Activated B cell treated with CpG ODN at 0.5 μM for 24 hours (primary cell): ENCODE measurements at regions of chr2 and their contacts with region 1.

Region 1: DNA sequence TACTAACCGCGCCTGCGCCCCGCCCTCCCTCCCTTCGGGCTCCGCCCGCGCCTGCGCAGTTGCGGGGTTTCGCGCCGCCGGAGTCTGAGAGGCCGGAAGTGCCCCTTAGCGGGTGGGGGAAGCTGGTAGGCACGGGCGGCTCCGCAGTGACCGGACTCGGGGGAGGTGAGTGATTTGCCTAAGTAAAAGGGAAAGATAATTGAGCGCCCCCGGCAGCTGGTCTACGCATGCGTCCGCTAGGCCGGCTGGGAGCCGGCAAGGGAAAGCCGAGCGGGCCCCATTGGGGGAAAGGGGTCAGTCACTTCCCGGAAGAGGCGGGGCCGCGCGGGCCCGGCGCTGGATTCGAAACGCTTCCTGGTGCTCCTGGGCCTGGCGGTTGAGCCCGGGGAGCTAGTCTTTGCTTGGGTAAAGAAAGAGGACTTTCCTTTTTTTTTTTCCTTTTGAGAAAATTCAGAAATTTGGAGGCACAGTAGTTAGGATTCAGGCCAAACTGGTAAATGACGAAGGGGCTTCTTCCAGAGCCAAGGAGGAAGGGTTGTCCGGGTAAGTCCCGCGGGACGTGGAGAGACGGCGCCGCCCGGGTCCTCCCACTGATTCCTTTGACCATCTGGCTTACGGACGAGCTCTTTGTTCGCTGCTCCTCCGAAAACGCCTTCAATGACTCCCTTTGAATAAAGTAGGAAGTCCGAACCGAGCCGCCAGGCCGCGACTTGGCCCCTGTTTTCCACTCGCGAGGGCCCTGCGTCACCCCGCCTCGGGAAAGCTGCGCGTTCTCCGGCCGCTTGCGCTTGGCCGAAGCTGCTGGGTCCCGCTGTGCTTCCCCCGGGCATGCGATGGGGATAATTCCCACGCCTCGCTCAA is at the starts of genes GEN1 and SMC6:
- DNase-seq: peak; percentile 90
- ATAC-seq: peak; percentile 83
- H3K4me3 Mint-ChIP-seq: peak within 1 kb of the TSS; percentile 95
- H3K27ac Mint-ChIP-seq: peak within 1 kb of the TSS; percentile 95
- H3K4me1 Mint-ChIP-seq: peaks cover 61% of the 10 kb centered on the region
- H3K27me3 Mint-ChIP-seq: no peaks in the 10 kb centered on the region
- CTCF ChIP-seq: no peak
- total RNA-seq, gene GEN1: 141 and 163 TPM in 2 replicates
- total RNA-seq, gene SMC6: 121 and 127 TPM in 2 replicates

Region 2: GRCh38 chr2:16656784-16657391 is 1097.1 kb before region 1 on chr2:
- CTCF ChIA-PET with region 1: no interaction called
- POLR2A ChIA-PET with region 1: interaction called, 3 read pairs
- intact Hi-C with region 1: loop called (anchors 5 kb)
- DNase-seq: no peak
- ATAC-seq: peak; percentile 59
- H3K4me3 Mint-ChIP-seq: peak overlapping the region; percentile 77
- H3K27ac Mint-ChIP-seq: peak overlapping the region; percentile 89
- H3K4me1 Mint-ChIP-seq: peaks cover 99% of the 10 kb centered on the region
- H3K27me3 Mint-ChIP-seq: no peaks in the 10 kb centered on the region
- CTCF ChIP-seq: no peak

Region 3: GRCh38 chr2:17373741-17374140 is 380.3 kb before region 1 on chr2:
- CTCF ChIA-PET with region 1: no interaction called
- POLR2A ChIA-PET with region 1: no interaction called
- intact Hi-C with region 1: no loop called
- DNase-seq: no peak
- ATAC-seq: no peak
- H3K4me3 Mint-ChIP-seq: no peak overlapping the region
- H3K27ac Mint-ChIP-seq: no peak overlapping the region
- H3K4me1 Mint-ChIP-seq: no peaks in the 10 kb centered on the region
- H3K27me3 Mint-ChIP-seq: peaks cover 9% of the 10 kb centered on the region
- CTCF ChIP-seq: no peak

Region 4: GRCh38 chr2:17518212-17519154 is 235.6 kb before region 1 on chr2 and contains the start of gene RAD51AP2:
- CTCF ChIA-PET with region 1: no interaction called
- POLR2A ChIA-PET with region 1: no interaction called
- intact Hi-C with region 1: loop called (anchors 5 kb)
- DNase-seq: peak; percentile 54
- ATAC-seq: peak; percentile 70
- H3K4me3 Mint-ChIP-seq: peak within 1 kb of the TSS; percentile 69
- H3K27ac Mint-ChIP-seq: peak within 1 kb of the TSS; percentile 80
- H3K4me1 Mint-ChIP-seq: peaks cover 26% of the 10 kb centered on the region
- H3K27me3 Mint-ChIP-seq: peaks cover 28% of the 10 kb centered on the region
- CTCF ChIP-seq: no peak
- total RNA-seq, gene RAD51AP2: not detected in 2 replicates

Region 5: GRCh38 chr2:17765408-17765807 is 11.4 kb after region 1 on chr2:
- CTCF ChIA-PET with region 1: no interaction called
- POLR2A ChIA-PET with region 1: interaction called, 6 read pairs
- intact Hi-C with region 1: loop called (anchors 1 kb)
- DNase-seq: no peak
- ATAC-seq: no peak
- H3K4me3 Mint-ChIP-seq: no peak overlapping the region
- H3K27ac Mint-ChIP-seq: no peak overlapping the region
- H3K4me1 Mint-ChIP-seq: no peaks in the 10 kb centered on the region
- H3K27me3 Mint-ChIP-seq: no peaks in the 10 kb centered on the region
- CTCF ChIP-seq: no peak

Region 6: GRCh38 chr2:17780546-17780945 is 26.5 kb after region 1 on chr2:
- CTCF ChIA-PET with region 1: no interaction called
- POLR2A ChIA-PET with region 1: interaction called, 10 read pairs
- intact Hi-C with region 1: no loop called
- DNase-seq: no peak
- ATAC-seq: no peak
- H3K4me3 Mint-ChIP-seq: no peak overlapping the region
- H3K27ac Mint-ChIP-seq: no peak overlapping the region
- H3K4me1 Mint-ChIP-seq: peaks cover 11% of the 10 kb centered on the region
- H3K27me3 Mint-ChIP-seq: no peaks in the 10 kb centered on the region
- CTCF ChIP-seq: no peak

Region 7: DNA sequence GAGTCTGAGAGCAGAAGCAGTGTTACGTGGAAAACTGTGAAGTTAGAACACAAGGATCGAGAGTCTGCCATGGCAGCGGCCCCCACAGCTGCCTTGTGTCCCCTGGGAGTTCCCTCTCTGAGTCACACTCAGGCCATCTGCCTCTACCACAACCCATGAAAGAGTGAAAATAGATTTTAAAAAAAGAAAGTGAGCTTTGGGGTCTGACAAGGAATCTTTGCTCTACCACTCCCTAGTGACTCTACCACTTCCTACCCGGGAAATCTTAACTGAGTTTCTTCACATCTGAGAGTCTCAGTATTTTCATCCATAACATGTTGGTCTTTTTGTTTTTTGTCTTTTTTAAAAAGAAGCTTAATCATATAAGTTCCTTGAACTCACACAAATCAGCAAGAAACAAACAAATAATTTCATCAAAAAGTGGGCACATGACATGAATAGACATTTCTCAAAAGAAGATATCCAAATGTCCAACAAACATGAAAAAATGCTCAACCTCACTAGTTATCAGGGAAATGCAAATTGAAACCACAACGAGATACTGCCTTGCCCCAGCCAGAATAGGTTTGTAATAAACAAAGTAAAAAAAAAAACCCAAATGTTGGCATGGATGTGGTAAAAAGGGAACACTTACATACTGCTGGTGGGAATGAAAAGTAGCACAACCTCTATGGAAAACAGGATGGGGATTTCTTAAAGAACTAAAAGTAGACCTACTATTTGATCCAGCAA is 59.9 kb after region 1 on chr2:
- CTCF ChIA-PET with region 1: interaction called, 7 read pairs
- POLR2A ChIA-PET with region 1: interaction called, 76 read pairs
- intact Hi-C with region 1: loop called (anchors 2 kb)
- DNase-seq: peak; percentile 56
- ATAC-seq: peak; percentile 82
- H3K4me3 Mint-ChIP-seq: peak overlapping the region; percentile 81
- H3K27ac Mint-ChIP-seq: peak overlapping the region; percentile 97
- H3K4me1 Mint-ChIP-seq: peaks cover 81% of the 10 kb centered on the region
- H3K27me3 Mint-ChIP-seq: no peaks in the 10 kb centered on the region
- CTCF ChIP-seq: no peak

Region 8: DNA sequence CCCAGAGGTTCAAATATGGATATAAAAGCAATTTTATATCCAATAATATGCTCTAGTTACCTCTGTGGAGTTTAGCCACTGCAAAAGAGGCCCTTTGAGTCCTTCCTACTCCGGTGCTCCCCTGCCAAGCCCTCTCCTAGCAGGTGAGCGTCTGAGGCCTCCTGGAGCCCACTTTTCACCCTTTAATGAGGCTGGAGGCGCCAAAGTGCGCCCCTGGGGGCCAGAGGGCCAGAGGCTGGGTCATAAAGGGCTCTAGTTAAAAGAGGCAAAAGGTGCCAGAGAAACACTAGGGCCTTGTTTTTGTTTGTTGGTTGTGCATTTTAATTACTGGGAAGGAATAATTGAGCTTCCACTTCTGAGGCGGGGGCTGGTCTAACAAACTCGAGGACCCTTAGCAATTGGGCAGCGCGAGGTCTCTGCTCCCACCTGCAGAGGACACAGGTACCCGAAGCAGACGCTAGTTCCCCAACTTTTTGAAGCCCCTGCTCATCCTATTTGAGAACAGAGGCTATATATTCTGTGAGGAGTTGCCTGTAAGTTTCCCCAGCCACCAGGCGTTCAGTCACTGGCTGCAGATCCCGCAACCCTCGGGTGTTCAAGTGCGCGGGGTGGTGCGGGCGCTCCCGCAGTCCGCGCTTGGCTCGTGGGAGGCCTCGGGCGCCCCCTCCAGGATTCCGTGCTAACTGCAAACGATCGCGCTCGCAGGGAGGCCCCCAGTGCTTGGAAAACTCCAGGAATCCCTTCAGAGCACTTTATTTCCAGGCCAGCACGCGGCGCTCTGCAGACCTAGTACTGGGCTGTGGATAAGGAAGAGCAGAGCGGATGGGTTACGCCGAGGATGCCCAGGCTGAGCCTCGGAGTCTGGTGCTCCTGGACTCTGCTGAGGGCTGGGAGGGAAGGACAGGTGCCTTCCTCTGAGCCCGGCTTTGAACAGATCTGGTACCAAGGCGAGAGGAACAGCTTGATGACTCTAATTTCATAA is 76.3 kb after region 1 on chr2:
- CTCF ChIA-PET with region 1: interaction called, 10 read pairs
- POLR2A ChIA-PET with region 1: interaction called, 19 read pairs
- intact Hi-C with region 1: loop called (anchors 1 kb)
- DNase-seq: peak; percentile 77
- ATAC-seq: peak; percentile 91
- H3K4me3 Mint-ChIP-seq: peak overlapping the region; percentile 70
- H3K27ac Mint-ChIP-seq: peak overlapping the region; percentile 46
- H3K4me1 Mint-ChIP-seq: peaks cover 44% of the 10 kb centered on the region
- H3K27me3 Mint-ChIP-seq: no peaks in the 10 kb centered on the region
- CTCF ChIP-seq: peak; percentile 45